ENCODE measurements at regions of chr9 and their contacts with region 1.

Region 1: DNA sequence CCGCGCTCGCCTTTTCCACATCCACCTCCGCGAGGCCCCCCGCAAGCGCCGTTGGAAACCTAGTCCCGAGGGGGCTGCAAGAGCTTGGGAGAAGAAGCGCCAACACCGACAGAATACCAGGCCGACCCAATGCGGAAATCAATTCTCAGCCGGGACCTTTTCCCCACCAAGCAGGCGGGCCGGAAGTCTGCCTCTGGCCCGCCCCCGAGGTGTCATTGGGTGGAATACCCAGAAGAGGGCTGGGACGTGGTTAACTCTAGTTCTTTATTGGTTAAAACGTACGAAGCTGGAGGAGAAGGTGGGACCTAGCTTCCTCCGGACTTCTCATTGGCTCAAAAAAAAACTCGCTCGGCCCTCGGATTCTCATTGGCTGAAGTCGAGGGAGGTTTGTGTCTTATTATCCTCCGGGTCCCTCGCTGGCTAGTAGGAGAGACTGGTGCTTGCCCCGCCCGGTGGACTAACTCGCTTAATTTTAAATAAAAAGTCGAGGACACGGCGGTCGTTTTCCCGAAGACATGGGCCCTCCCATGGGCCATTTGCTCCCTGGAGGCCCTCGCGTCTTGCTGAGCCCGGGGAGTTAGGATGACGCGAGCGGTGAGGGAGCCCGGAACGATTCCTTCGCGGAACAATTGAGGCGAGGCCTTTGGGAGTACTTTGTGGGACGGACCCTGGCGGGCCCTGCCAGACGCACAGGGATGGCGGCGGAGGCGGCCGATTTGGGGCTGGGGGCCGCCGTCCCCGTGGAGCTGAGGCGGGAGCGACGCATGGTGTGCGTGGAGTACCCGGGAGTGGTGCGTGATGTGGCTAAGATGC is at the start of gene GTF3C5:
- DNase-seq: peak; percentile 99
- H3K4me3 Mint-ChIP-seq: peak within 1 kb of the TSS; percentile 99
- H3K27ac Mint-ChIP-seq: peak within 1 kb of the TSS; percentile 99
- H3K4me1 Mint-ChIP-seq: peaks cover 29% of the 10 kb centered on the region
- H3K27me3 Mint-ChIP-seq: no peaks in the 10 kb centered on the region
- CTCF ChIP-seq: no peak
- total RNA-seq, gene GTF3C5: 53.9 and 55.4 TPM in 2 replicates

Region 2: GRCh38 chr9:133004091-133004998 is 26.2 kb before region 1 on chr9:
- CTCF ChIA-PET with region 1: interaction called, 3 read pairs
- POLR2A ChIA-PET with region 1: interaction called, 10 read pairs
- intact Hi-C with region 1: no loop called
- DNase-seq: no peak
- H3K4me3 Mint-ChIP-seq: no peak overlapping the region
- H3K27ac Mint-ChIP-seq: no peak overlapping the region
- H3K4me1 Mint-ChIP-seq: peaks cover 9% of the 10 kb centered on the region
- H3K27me3 Mint-ChIP-seq: peaks cover 30% of the 10 kb centered on the region
- CTCF ChIP-seq: no peak

Region 3: DNA sequence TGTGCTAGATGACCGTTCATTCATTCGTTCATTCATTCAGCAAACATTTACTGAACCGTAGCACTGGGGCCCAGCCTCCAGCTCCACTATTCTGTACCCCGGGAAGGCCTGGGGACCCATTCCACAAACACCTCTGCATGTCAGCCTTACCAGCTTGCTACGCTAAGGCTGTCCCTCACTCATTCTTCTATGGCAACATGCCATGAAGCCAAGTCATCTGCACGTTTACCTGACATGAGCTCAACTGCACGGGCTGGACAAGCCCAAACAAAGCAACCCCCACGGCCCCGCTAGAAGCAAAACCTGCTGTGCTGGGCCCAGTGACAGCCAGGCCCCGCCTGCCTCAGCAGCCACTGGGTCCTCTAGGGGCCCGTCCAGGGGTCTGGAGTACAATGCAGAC is 37.3 kb after region 1 on chr9:
- CTCF ChIA-PET with region 1: interaction called, 3 read pairs
- POLR2A ChIA-PET with region 1: interaction called, 18 read pairs
- intact Hi-C with region 1: no loop called
- DNase-seq: peak; percentile 71
- H3K4me3 Mint-ChIP-seq: no peak overlapping the region
- H3K27ac Mint-ChIP-seq: peak overlapping the region; percentile 61
- H3K4me1 Mint-ChIP-seq: no peaks in the 10 kb centered on the region
- H3K27me3 Mint-ChIP-seq: no peaks in the 10 kb centered on the region
- CTCF ChIP-seq: no peak

Region 4: DNA sequence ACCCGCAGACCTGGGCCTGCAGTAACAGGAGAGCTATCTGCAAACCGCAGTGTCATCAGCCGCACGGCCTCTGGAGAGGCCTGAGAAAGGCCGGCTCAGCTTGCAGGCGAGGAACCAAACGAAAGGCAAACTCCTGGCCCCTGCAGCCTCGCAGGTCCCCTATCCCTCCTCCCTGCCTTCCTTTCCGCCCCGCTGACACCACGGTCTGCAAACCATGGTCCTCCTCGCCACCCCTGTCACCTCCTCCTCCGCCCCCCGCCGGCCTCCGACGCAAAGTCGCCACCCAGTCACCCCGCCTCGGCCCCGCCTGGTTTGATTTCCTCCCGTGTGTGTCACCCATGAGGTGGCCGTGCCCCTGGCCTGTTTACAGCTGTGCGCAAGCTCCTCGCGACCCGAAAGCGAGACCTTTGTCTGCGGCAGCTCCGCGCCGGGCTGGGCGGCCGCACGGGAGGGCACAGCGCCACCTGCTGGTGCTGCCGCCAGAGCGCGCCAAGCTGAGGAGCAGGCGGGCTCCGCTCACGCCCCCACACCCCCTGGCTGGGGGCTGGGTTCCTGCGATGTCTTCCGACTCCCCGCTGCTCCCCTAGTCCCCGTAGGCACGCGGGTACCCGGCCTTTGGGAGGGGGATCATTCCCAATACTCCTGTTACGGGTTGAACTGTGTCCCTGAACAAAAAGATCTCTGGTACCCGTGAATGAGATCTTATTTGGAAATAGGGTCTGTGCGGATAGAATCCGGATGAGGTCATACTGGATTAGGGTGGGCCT is 113.8 kb after region 1 on chr9:
- CTCF ChIA-PET with region 1: interaction called, 19 read pairs
- POLR2A ChIA-PET with region 1: interaction called, 33 read pairs
- intact Hi-C with region 1: loop called (anchors 5 kb)
- DNase-seq: peak; percentile 53
- H3K4me3 Mint-ChIP-seq: peak overlapping the region; percentile 57
- H3K27ac Mint-ChIP-seq: no peak overlapping the region
- H3K4me1 Mint-ChIP-seq: peaks cover 24% of the 10 kb centered on the region
- H3K27me3 Mint-ChIP-seq: no peaks in the 10 kb centered on the region
- CTCF ChIP-seq: peak; percentile 98

Region 5: DNA sequence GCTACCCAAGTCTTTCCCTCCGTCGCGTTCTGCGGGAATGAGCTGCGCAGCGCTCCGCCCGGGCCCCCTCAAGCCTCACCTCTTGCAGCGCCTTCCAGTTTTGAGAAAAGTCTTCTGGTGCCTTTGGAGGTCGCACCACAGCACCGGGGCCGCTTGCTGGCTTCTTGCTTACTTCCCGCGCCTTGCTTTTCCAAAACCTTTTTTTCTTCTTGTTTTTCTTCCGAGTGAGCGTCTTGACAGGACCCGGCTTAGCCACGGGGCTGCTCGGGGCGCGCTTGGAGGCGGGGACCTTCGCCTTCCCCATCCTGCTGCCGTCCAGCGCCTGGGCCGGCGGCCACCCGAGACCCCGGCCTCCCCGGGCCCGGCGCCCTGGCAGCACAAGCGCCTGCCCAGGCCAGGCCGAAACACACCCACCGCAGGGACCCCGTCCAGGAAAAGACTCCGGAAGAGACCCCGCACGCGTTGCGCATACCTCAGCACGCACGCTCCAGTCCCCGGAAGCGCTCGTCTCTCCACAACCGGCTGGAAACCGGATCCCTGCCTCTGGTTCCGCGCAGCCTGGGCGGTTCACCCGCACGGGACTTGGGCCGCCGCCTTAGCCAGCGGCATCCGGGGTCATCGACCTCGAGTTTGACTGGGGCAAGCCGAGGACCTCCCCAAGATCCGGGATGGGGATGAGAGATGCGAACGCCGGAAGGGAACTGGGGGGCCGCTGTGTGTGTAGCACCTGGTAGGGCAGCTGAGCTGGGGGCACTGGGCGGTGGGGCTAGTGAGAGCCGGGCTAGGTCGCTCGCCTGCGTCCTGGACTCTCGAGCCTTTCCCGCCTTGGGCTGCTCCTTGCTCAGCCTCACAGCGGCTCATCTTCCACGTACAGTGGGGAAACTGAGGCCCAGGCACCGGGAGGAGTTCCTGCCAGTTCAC is 387.3 kb after region 1 on chr9 and contains the start of gene REXO4:
- CTCF ChIA-PET with region 1: interaction called, 4 read pairs
- POLR2A ChIA-PET with region 1: interaction called, 10 read pairs
- intact Hi-C with region 1: no loop called
- DNase-seq: peak; percentile 84
- H3K4me3 Mint-ChIP-seq: peak within 1 kb of the TSS; percentile 90
- H3K27ac Mint-ChIP-seq: peak within 1 kb of the TSS; percentile 70
- H3K4me1 Mint-ChIP-seq: peaks cover 17% of the 10 kb centered on the region
- H3K27me3 Mint-ChIP-seq: no peaks in the 10 kb centered on the region
- CTCF ChIP-seq: no peak
- total RNA-seq, gene REXO4: 26.0 and 38.1 TPM in 2 replicates

Measured in MCF 10A (cell line).